A549 (cell line): ENCODE measurements at regions of chr5 and their contacts with region 1.

Region 1: DNA sequence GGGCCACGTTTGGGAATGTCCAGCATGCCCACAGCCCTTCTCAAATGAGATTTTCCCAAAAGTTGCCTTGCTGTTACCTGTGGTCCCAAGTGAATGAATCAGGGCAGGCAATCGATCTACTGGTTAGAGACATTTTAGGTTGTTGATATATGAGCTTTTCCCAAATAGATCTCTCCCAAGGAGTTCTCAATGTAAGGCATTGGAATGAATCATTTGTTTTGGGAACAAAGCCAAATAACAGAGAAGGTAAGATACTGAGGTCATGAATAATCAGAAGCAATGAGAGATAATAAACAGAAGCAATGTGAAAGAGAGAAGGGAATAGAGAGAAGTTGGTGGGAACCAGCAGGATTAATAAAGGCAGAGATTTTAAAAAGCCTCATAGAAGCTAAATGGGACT is 93.7 kb upstream of the FER start:
- DNase-seq: no peak
- ATAC-seq: no peak
- H3K4me3 ChIP-seq: no peak overlapping the region
- H3K27ac ChIP-seq: no peak overlapping the region
- H3K4me1 ChIP-seq: peaks cover 8% of the 10 kb centered on the region; the same call in 1 of the 3 replicates
- CTCF ChIP-seq: no peak
- EP300 ChIP-seq: no peak
- POLR2A ChIP-seq: no peak
- RAD21 ChIP-seq: no peak

Region 2: GRCh38 chr5:108642167-108642906 is 11.7 kb before region 1 on chr5:
- CTCF ChIA-PET with region 1: interaction called, 14 read pairs
- POLR2A ChIA-PET with region 1: no interaction called
- DNase-seq: peak; percentile 65 to 76
- ATAC-seq: peak; percentile 95 to 99
- H3K4me3 ChIP-seq: no peak overlapping the region
- H3K27ac ChIP-seq: no peak overlapping the region
- H3K4me1 ChIP-seq: no peaks in the 10 kb centered on the region
- CTCF ChIP-seq: peak; percentile 90
- EP300 ChIP-seq: no peak
- POLR2A ChIP-seq: no peak
- RAD21 ChIP-seq: peak; percentile 88 to 91

Region 3: DNA sequence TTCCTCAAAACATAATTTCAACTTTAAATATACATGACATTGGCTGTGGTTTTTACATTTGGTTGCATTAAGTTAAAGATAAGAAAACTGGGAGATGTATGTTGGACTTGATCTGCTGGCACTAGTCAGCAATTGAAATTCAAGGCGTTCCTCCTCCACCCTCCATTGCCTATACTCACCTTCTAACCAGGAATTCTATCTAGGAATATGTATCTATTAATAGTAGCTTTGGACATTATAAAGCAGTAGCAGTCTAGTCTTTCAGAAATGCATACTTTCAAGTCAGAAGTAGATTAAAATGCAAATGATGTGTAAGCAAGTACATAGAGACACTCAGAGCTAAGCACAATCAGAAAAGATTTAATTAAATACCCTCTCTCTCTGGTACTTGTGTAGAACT is 118.6 kb after region 1 on chr5:
- CTCF ChIA-PET with region 1: no interaction called
- POLR2A ChIA-PET with region 1: no interaction called
- DNase-seq: no peak
- ATAC-seq: no peak
- H3K4me3 ChIP-seq: no peak overlapping the region
- H3K27ac ChIP-seq: no peak overlapping the region
- H3K4me1 ChIP-seq: no peaks in the 10 kb centered on the region
- CTCF ChIP-seq: no peak
- EP300 ChIP-seq: no peak
- POLR2A ChIP-seq: no peak
- RAD21 ChIP-seq: no peak

Region 4: DNA sequence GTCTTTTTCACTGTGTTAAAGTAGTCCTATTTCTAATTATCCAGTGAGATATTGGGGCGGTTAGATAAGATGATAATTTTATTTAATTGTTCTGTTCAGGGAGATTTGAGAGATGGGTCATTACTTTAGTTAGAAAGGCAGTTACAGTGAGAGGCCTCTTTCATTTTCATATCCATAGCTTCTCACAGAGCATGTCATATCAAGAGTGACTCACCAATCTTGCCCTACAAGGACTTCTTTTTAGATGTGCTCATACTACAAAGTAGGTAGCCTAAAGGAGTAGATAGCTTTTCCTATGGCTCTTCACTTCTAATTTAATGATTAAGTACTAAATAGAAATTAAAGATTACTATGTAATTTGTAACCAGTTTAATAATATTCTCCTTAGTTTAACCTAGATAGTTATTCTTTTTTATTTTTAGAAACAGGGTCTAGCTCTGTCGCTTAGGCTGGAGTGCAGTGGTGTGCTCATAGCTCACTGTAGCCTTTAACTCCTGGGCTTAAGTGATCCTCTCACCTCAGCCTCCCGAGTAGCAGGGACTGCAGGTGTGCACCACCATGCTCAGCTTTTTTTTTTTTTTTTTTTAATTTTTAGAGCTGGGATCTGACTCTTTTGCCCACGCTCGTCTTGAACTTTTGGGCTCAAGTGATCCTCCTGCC is 164.7 kb after region 1 on chr5:
- CTCF ChIA-PET with region 1: no interaction called
- POLR2A ChIA-PET with region 1: no interaction called
- DNase-seq: peak in 1 of 2 experiments; percentile 13
- ATAC-seq: 0 out of 6 replicates have a peak, but pooled peaks have one; percentile 41 to 50
- H3K4me3 ChIP-seq: no peak overlapping the region
- H3K27ac ChIP-seq: no peak overlapping the region
- H3K4me1 ChIP-seq: no peaks in the 10 kb centered on the region; the same call in 2 of the 3 replicates
- CTCF ChIP-seq: no peak
- EP300 ChIP-seq: no peak
- POLR2A ChIP-seq: no peak
- RAD21 ChIP-seq: no peak